T-cell (primary cell): ENCODE measurements at regions of chr21 and their contacts with region 1.

Region 1: DNA sequence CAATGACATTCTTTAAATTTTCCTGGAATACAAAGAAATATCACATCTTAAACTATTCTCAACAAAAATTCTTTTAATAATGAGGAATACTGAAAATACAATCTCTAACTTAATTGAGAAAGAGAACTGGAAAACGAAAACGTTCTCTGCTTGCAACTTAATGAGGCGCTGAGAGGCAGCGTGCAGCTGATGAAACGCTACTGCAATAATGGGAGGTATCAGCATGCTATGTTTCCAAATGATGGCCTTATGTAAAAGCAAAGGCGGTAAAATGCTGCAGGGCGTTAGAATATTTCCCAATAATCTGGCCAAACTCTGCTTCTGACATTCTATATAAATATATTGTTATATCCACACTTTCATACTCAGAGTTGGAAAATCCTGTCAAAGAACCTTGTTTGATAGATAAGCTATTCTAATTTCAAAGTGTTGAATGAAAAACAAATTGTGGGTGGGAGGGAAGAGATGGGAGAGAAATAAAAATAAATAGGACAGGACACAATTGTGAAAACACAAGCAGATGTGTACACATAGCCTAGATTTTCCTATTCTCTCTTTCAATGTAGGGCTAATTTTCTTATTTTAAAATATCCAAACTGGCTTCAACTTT is 70.9 kb downstream of the APP start:
- DNase-seq: no peak
- ATAC-seq: no peak
- H3K4me3 ChIP-seq: no peak overlapping the region
- H3K4me3 Mint-ChIP-seq: no peak overlapping the region
- H3K27ac ChIP-seq: no peak overlapping the region
- H3K27ac Mint-ChIP-seq: no peak overlapping the region
- H3K4me1 ChIP-seq: no peaks in the 10 kb centered on the region
- H3K4me1 Mint-ChIP-seq: peaks cover 0 to 2% (median 2%) of the 10 kb centered on the region in 3 donors
- H3K27me3 ChIP-seq: no peaks in the 10 kb centered on the region
- H3K27me3 Mint-ChIP-seq: no peaks in the 10 kb centered on the region

Region 2: GRCh38 chr21:26042181-26042876 is 57.4 kb before region 1 on chr21:
- CTCF ChIA-PET with region 1: no interaction called
- POLR2A ChIA-PET with region 1: interaction called in 1 of 2 experiments, 11 read pairs
- DNase-seq: no peak
- ATAC-seq: no peak
- H3K4me3 ChIP-seq: no peak overlapping the region
- H3K4me3 Mint-ChIP-seq: no peak overlapping the region
- H3K27ac ChIP-seq: no peak overlapping the region
- H3K27ac Mint-ChIP-seq: no peak overlapping the region
- H3K4me1 ChIP-seq: no peaks in the 10 kb centered on the region
- H3K4me1 Mint-ChIP-seq: no peaks in the 10 kb centered on the region
- H3K27me3 ChIP-seq: no peaks in the 10 kb centered on the region
- H3K27me3 Mint-ChIP-seq: no peaks in the 10 kb centered on the region

Region 3: GRCh38 chr21:26194326-26194725 is 94.6 kb after region 1 on chr21:
- CTCF ChIA-PET with region 1: no interaction called
- POLR2A ChIA-PET with region 1: interaction called in 1 of 2 experiments, 14 read pairs
- DNase-seq: no peak
- ATAC-seq: no peak
- H3K4me3 ChIP-seq: no peak overlapping the region
- H3K4me3 Mint-ChIP-seq: no peak overlapping the region
- H3K27ac ChIP-seq: no peak overlapping the region
- H3K27ac Mint-ChIP-seq: no peak overlapping the region
- H3K4me1 ChIP-seq: no peaks in the 10 kb centered on the region
- H3K4me1 Mint-ChIP-seq: no peaks in the 10 kb centered on the region
- H3K27me3 ChIP-seq: no peaks in the 10 kb centered on the region
- H3K27me3 Mint-ChIP-seq: no peaks in the 10 kb centered on the region